Common myeloid progenitor, CD34-positive (primary cell): ENCODE measurements at regions of chr11 and their contacts with region 1.

Region 1: DNA sequence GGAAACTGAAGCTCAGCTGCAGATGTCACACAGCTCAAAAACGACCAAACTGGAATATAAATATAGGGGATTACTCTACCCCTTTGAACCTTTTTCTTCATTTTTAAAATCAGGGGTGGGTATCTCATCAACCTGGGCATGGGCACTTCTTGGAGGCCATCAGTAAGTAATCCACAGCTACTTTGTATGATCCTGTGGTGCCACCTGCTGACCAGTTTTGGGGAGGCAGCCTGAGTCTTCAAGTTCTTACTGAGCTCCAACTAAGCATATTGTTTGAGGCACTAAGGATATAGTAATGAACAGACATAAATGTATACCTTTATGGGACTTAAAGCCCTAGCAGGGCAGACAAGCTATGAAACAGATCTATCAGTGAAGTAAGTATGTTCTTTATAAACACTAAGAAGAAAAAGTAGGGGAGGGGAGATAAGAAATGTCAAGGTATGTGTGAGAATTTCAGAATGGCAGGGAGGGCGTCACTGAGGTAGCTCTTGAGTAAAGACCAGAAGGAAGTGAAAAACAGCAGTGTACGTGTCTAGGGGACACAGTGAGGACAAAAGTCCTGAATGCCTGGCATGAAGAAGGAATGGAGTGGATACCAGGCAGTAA is 18.4 kb downstream of the TUB start:
- DNase-seq: peak; percentile 78 to 88 (median 81)
- H3K4me3 ChIP-seq: no peak overlapping the region
- H3K27ac ChIP-seq: no peak overlapping the region
- H3K4me1 ChIP-seq: peaks cover 0 to 9% (median 1%) of the 10 kb centered on the region in 4 experiments
- H3K27me3 ChIP-seq: peaks cover 0 to 6% (median 0%) of the 10 kb centered on the region in 5 experiments

Region 2: DNA sequence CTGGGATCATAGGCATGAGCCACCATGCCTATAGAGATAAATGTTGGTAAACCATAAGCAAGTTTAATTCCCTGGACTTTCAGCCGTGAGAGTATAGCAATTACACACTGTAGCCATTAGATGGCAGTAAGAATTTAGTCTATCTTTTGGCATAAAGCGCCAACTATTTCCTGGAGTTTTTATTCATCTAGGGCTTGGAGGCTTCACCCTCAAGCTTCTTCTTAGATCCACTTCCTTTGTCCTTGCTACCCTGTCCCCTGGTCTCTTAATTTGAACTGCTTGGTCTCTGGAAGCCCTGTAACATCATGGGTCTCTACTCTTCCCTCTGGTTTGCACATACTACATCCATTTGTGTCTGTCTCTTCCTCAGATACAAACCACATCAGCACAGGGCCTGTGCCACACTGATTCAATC is 206.5 kb before region 1 on chr11:
- CTCF ChIA-PET with region 1: interaction called, 11 read pairs
- POLR2A ChIA-PET with region 1: no interaction called
- DNase-seq: peak; percentile 46 to 61 (median 59)
- H3K4me3 ChIP-seq: no peak overlapping the region
- H3K27ac ChIP-seq: no peak overlapping the region
- H3K4me1 ChIP-seq: peaks cover 0 to 2% (median 0%) of the 10 kb centered on the region in 4 experiments
- H3K27me3 ChIP-seq: peaks cover 2 to 16% (median 6%) of the 10 kb centered on the region in 5 experiments

Region 3: GRCh38 chr11:8006349-8006977 is 92.9 kb before region 1 on chr11:
- CTCF ChIA-PET with region 1: interaction called, 429 read pairs
- POLR2A ChIA-PET with region 1: no interaction called
- DNase-seq: peak; percentile 51 to 69 (median 61)
- H3K4me3 ChIP-seq: no peak overlapping the region
- H3K27ac ChIP-seq: no peak overlapping the region
- H3K4me1 ChIP-seq: no peaks in the 10 kb centered on the region
- H3K27me3 ChIP-seq: peaks cover 0 to 2% (median 0%) of the 10 kb centered on the region in 5 experiments

Region 4: DNA sequence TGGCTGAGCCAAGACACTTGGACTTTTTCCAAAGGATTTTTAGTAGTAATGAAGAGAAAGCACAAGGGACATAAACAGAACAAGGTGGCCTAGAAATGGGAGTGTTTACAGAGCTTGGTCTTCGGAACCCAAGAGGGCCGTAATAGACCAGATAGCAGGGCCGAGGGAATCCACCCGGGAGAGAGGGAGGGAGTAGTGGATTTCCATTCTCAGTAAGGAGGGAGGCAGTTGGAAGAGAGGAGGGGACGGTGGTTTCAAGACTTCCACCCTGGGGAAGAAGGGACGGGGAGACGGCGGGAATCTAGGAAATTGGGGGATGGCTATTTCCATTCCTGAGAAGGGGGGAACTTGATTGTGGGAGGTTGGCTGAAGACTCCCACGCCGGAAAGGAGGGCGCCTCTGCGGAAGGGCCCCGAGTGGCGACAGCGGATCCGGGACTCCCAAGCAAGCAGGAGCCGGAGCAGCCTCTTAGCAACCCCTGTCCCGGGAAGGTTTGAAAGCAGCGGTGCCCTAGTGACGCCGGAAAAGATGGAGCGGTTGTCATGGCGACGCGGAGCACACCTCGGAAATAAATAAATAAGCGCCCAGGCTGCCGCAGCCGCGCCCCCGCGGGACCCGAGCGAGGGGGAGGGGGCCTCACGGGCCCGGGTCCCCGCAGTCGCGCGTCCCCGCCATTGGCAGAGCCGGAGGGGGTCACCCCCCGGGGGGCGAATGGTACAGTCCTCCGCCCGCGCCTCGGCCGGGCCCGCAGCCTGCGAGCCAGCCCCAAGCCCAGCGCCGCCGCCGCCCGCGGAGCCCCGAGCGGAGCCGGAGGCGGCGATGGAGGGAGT is 80.7 kb before region 1 on chr11:
- CTCF ChIA-PET with region 1: interaction called, 24 read pairs
- POLR2A ChIA-PET with region 1: no interaction called
- DNase-seq: peak; percentile 46 to 80 (median 70)
- H3K4me3 ChIP-seq: peak overlapping the region in 6 of 7 experiments; percentile 45 to 77 (median 62)
- H3K27ac ChIP-seq: no peak overlapping the region
- H3K4me1 ChIP-seq: peaks cover 2 to 19% (median 11%) of the 10 kb centered on the region in 4 experiments
- H3K27me3 ChIP-seq: peaks cover 13 to 58% (median 42%) of the 10 kb centered on the region in 5 experiments

Region 5: GRCh38 chr11:8033305-8034105 is 65.9 kb before region 1 on chr11:
- CTCF ChIA-PET with region 1: interaction called, 278 read pairs
- POLR2A ChIA-PET with region 1: no interaction called
- DNase-seq: peak; percentile 81 to 88 (median 88)
- H3K4me3 ChIP-seq: peak overlapping the region in 2 of 7 experiments; percentile 2 to 39
- H3K27ac ChIP-seq: no peak overlapping the region
- H3K4me1 ChIP-seq: peaks cover 0 to 10% (median 4%) of the 10 kb centered on the region in 4 experiments
- H3K27me3 ChIP-seq: peaks cover 0 to 15% (median 9%) of the 10 kb centered on the region in 5 experiments

Region 6: GRCh38 chr11:8080674-8081590 is 18.5 kb before region 1 on chr11 and contains the start of gene TUB:
- CTCF ChIA-PET with region 1: interaction called, 107 read pairs
- POLR2A ChIA-PET with region 1: no interaction called
- DNase-seq: peak; percentile 22 to 67 (median 56)
- H3K4me3 ChIP-seq: peak within 1 kb of the TSS in 6 of 7 experiments; percentile 13 to 79 (median 54)
- H3K27ac ChIP-seq: no peak within 1 kb of the TSS
- H3K4me1 ChIP-seq: peaks cover 0 to 14% (median 7%) of the 10 kb centered on the region in 4 experiments
- H3K27me3 ChIP-seq: peaks cover 2 to 42% (median 36%) of the 10 kb centered on the region in 5 experiments

Region 7: DNA sequence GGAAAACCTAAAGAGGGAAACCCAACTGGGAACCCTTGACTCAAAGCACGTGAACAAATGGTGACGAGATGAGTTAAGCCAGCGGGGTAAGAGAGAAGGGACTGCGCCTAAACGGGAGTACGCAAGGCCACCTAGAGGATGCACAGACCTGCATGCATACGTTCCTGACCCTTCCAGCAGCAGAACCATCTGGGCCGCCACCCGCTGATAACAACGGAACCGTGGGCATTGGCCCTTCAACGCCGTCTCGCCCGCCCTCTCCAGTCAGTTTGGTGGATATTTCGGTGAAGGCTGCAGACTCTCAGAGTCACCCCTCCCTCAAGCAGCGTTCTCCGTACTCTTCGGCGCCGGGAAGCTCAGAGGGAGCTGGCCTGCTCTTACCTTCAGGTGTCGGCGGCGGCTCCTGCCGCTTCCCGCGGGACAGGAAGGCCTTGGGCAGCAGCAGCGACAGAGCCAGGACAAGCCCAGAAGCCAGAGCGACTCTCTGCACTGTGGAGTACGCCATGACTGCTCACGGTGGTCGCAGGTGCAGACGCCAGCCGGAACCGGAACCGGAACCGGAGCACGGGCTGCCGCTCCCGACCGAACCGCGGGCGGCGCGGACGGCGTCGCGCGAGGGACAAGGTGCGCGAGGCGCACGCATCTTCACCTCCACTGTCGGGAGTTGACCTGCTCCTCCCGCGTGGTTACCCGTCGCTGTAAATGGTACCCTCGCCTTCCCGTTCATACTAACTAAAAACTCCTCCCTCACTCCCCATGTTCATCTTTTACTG is 69.3 kb after region 1 on chr11 and contains the start of gene RIC3:
- CTCF ChIA-PET with region 1: no interaction called
- POLR2A ChIA-PET with region 1: no interaction called
- DNase-seq: peak; percentile 25 to 53 (median 48)
- H3K4me3 ChIP-seq: peak within 1 kb of the TSS; percentile 15 to 88 (median 71)
- H3K27ac ChIP-seq: no peak within 1 kb of the TSS
- H3K4me1 ChIP-seq: peaks cover 0 to 20% (median 9%) of the 10 kb centered on the region in 4 experiments
- H3K27me3 ChIP-seq: peaks cover 2 to 35% (median 22%) of the 10 kb centered on the region in 5 experiments